ENCODE measurements at regions of chr5 and their contacts with region 1.

Region 1: DNA sequence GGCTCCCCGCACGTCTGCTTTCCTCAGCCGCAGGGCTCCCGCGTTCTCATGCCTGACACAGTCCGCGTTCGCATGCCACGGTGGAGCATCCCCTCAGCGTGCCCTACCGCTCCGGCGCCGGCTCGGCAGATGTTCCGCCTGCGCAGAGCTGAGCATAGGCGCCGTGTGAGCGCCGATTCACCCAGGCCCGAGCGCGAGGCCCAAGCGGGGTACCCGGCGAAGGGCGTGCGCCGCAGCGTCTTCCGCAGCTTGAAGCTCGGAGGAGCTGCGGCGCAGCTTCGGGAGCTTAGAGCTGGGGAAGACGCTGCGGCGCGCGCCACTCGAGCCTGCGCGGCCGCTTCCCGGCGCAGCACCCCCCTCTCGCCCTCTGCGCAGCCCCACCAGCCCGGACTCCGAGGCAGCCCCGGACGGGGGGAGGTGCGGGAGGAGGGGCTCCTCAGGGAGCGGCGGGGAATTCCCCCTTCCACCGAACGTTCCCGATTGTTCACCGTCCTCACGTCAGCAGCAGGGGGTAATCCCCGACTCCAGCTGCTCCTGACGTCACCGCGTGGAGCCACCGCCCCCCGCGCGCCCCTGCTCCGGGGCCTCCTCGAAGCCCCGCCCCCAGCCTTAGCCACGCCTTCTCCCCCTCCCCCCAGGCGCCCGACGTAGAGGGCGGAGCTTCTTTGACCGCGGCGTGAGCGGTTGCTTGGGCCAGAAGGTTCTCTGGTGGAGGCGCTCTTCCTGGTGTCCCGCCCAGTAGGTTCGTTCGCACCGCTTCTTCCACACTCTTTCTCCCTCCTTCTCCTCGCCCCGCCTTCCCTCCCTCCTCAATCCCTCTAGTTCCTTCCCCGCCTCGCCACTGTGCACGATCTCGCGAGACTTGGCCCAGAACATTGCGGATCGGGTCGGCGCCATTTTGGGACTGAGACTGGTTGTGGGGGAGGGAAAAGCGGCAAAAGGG is at the start of gene GPBP1:
- DNase-seq: peak; percentile 97
- H3K4me3 Mint-ChIP-seq: peak within 1 kb of the TSS; percentile 96
- H3K27ac Mint-ChIP-seq: peak within 1 kb of the TSS; percentile 97
- H3K4me1 Mint-ChIP-seq: peaks cover 47% of the 10 kb centered on the region
- H3K27me3 Mint-ChIP-seq: no peaks in the 10 kb centered on the region
- total RNA-seq, gene GPBP1: 94.6 and 106 TPM in 2 replicates

Region 2: DNA sequence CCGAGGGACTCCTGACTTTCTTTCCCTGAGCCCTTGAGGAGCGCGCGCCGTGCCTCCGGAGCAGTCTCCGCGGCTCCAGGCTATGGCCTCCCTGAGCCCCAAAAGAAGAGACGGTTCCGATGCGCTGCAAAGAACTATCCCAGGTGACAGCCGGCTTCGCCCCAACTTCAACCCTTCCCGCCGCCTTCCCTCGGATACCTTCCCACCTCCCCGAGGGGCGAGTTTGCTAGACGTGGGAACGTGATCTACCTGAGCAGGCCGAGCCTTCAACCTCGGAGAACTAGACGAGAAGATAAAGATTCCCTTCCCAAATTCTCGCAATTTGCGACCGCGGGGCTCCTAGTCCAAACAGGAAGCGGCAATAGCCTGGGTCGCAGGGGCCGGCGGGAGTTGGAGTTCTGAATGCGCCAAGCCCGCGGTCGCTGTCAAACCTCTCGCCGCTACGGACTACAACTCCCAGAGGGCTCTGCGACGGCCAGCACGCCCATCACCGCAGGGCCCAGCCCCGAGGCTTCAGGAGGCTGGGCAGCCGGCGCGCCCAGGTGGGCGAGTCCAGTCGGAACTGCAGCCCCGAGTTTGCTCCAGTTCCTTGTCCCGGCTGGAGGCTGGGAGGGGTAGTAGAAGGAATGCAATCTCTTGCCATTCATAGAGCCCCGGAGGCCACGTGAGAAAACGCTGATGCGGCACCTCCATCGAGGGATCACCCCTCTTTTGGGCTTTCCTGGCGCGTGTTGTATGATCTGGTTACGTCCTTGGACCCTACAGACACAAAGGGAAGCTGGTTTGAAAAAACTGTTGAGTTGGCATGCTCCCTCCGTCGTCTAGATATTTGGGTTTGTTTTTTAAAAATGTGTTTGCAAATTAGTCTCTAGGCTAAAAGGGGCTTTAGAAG is 1461.2 kb before region 1 on chr5 and contains the start of gene SLC38A9:
- intact Hi-C with region 1: loop called (anchors 5 kb)
- DNase-seq: peak; percentile 89
- H3K4me3 Mint-ChIP-seq: peak within 1 kb of the TSS; percentile 99
- H3K27ac Mint-ChIP-seq: peak within 1 kb of the TSS; percentile 91
- H3K4me1 Mint-ChIP-seq: peaks cover 39% of the 10 kb centered on the region
- H3K27me3 Mint-ChIP-seq: no peaks in the 10 kb centered on the region
- total RNA-seq, gene SLC38A9: 22.9 and 25.7 TPM in 2 replicates

Region 3: DNA sequence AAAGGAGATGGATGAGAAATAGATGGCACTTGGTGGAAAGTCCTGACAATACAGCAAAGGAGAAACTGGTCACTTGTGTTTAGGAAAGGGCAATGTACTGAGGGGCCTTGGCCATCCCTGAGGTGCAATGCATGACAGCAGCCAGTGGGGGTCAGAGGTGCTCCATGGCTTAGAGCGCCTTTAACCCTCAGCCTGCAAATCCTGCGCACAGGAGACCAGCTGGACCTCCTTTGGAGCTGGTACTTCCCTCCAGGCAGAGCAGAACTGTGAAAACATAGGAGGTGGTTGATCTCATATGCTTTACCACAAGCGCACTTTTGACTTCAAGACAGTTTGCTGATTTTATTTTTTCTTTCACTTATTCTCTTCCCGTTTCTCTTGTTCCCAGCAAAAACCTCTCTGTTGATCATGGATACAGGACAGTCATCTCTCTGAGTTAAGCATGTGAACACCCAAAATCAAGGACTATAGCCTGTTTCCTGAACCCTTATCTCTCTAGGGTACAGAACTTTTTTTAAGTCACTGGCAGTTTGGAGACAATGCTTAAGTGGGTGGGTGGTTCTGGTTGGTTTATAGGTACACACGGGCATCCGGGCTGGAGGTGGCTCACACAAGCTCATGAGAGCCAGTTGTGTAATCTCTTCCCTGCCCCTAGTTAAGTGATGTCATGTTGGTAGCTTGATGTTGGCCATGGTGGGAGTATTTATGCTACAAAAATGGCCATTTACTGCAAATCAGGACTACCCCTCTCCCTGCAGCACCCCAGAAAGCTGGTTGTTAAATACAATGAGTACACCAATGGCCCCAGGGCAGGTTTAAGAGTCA is 902.7 kb before region 1 on chr5:
- intact Hi-C with region 1: loop called (anchors 5 kb)
- DNase-seq: peak; percentile 65
- H3K4me3 Mint-ChIP-seq: peak overlapping the region; percentile 48
- H3K27ac Mint-ChIP-seq: peak overlapping the region; percentile 46
- H3K4me1 Mint-ChIP-seq: peaks cover 21% of the 10 kb centered on the region
- H3K27me3 Mint-ChIP-seq: no peaks in the 10 kb centered on the region

Region 4: GRCh38 chr5:56900858-56901578 is 272.4 kb before region 1 on chr5:
- intact Hi-C with region 1: loop called (anchors 2 kb)
- DNase-seq: no peak
- H3K4me3 Mint-ChIP-seq: no peak overlapping the region
- H3K27ac Mint-ChIP-seq: no peak overlapping the region
- H3K4me1 Mint-ChIP-seq: no peaks in the 10 kb centered on the region
- H3K27me3 Mint-ChIP-seq: peaks cover 10% of the 10 kb centered on the region

Region 5: DNA sequence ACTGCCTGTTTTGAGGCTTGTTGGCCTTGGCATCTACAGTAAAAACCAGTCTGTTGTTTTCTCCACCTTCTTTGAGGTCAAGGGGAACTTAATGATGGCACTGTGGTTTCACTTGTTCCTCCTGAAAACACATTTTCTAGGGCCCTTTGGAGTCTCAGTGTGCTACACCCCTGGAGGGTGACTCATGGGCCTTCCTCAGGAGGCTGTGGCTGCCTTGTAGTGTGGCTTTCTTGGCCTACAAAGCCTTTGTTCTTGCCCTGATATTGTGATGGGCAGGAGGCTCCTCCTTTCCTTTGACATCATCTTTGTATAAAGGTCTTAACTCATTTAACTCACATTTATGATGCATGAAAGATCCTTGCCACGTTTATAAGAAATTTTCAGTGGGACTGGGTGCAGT is 55.9 kb before region 1 on chr5:
- intact Hi-C with region 1: loop called (anchors 2 kb)
- DNase-seq: peak; percentile 70
- H3K4me3 Mint-ChIP-seq: peak overlapping the region; percentile 54
- H3K27ac Mint-ChIP-seq: peak overlapping the region; percentile 81
- H3K4me1 Mint-ChIP-seq: peaks cover 23% of the 10 kb centered on the region
- H3K27me3 Mint-ChIP-seq: no peaks in the 10 kb centered on the region

Region 6: GRCh38 chr5:57784121-57784520 is 610.7 kb after region 1 on chr5:
- intact Hi-C with region 1: no loop called
- DNase-seq: no peak
- H3K4me3 Mint-ChIP-seq: no peak overlapping the region
- H3K27ac Mint-ChIP-seq: no peak overlapping the region
- H3K4me1 Mint-ChIP-seq: no peaks in the 10 kb centered on the region
- H3K27me3 Mint-ChIP-seq: peaks cover 6% of the 10 kb centered on the region

Region 7: GRCh38 chr5:58460732-58461286 is 1287.4 kb after region 1 on chr5:
- intact Hi-C with region 1: loop called (anchors 1 kb)
- DNase-seq: peak; percentile 85
- H3K4me3 Mint-ChIP-seq: peak overlapping the region; percentile 2
- H3K27ac Mint-ChIP-seq: peak overlapping the region; percentile 59
- H3K4me1 Mint-ChIP-seq: peaks cover 15% of the 10 kb centered on the region
- H3K27me3 Mint-ChIP-seq: peaks cover 16% of the 10 kb centered on the region

Region 8: GRCh38 chr5:59152701-59153245 is 1979.3 kb after region 1 on chr5:
- intact Hi-C with region 1: loop called (anchors 10 kb)
- DNase-seq: peak; percentile 14
- H3K4me3 Mint-ChIP-seq: peak overlapping the region; percentile 58
- H3K27ac Mint-ChIP-seq: no peak overlapping the region
- H3K4me1 Mint-ChIP-seq: no peaks in the 10 kb centered on the region
- H3K27me3 Mint-ChIP-seq: no peaks in the 10 kb centered on the region

Measured in activated T-helper 1 cell treated with anti-CD3 and anti-CD28 coated beads, Interleukin-12 subunit alpha, Interleukin-12 subunit beta, Interleukin-2, Interleukin-4 antibody, amounts not matched to agents 30 ng/mL and 10 ng/mL and 1 ng/mL, durations not matched to agents 14 hours and 24 hours and 36 hours (primary cell).